ENCODE measurements at regions of chr16 and their contacts with region 1.

Region 1: GRCh38 chr16:87895641-87896141 is 26.4 kb upstream of the SLC7A5 start:
- DNase-seq: no peak
- H3K4me3 ChIP-seq: no peak overlapping the region
- H3K27ac ChIP-seq: no peak overlapping the region
- H3K4me1 ChIP-seq: peaks cover 2% of the 10 kb centered on the region
- H3K27me3 ChIP-seq: no peaks in the 10 kb centered on the region
- CTCF ChIP-seq: no peak
- EP300 ChIP-seq: no peak
- POLR2A ChIP-seq: no peak

Region 2: GRCh38 chr16:88393034-88393433 is 497.3 kb after region 1 on chr16:
- intact Hi-C with region 1: loop called in 1 of 4 experiments (anchors 5 kb)
- DNase-seq: no peak
- H3K4me3 ChIP-seq: no peak overlapping the region
- H3K27ac ChIP-seq: no peak overlapping the region
- H3K4me1 ChIP-seq: peaks cover 5% of the 10 kb centered on the region
- H3K27me3 ChIP-seq: no peaks in the 10 kb centered on the region
- CTCF ChIP-seq: no peak
- EP300 ChIP-seq: no peak
- POLR2A ChIP-seq: no peak

Region 3: GRCh38 chr16:89484923-89485679 is 1589.4 kb after region 1 on chr16:
- intact Hi-C with region 1: loop called in 1 of 4 experiments (anchors 5 kb)
- DNase-seq: no peak
- H3K4me3 ChIP-seq: no peak overlapping the region
- H3K27ac ChIP-seq: no peak overlapping the region
- H3K4me1 ChIP-seq: peaks cover 30% of the 10 kb centered on the region
- H3K27me3 ChIP-seq: no peaks in the 10 kb centered on the region
- CTCF ChIP-seq: no peak
- EP300 ChIP-seq: no peak
- POLR2A ChIP-seq: no peak

Measured in ovary (tissue), 10 donors.